PC-9 (cell line): ENCODE measurements at regions of chr9 and their contacts with region 1.

Region 1: DNA sequence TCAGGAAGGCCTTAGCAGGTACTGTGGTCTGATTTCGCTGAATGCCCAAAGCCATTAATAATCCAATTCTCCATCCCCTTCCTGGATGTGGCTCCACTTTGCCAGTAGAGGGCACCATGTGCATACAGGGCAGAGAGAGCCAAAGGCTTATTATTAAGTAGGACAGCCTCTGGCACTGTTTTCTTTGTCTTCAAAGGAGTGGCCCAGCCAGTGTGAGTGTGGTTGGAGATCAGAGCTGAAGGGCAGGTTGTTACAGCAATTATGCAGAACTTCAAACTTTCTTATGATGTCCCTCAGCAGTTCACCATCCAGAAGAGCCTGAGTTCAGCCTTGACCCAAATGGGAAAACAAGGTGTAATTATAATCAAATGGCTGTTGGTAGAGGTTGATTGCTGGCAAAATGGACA is 38.6 kb upstream of the CEMIP2 start:
- DNase-seq: peak; percentile 66 to 79
- H3K4me3 ChIP-seq: no peak overlapping the region
- H3K27ac ChIP-seq: no peak overlapping the region
- H3K4me1 ChIP-seq: no peaks in the 10 kb centered on the region
- H3K27me3 ChIP-seq: no peaks in the 10 kb centered on the region
- CTCF ChIP-seq: peak; percentile 89

Region 2: DNA sequence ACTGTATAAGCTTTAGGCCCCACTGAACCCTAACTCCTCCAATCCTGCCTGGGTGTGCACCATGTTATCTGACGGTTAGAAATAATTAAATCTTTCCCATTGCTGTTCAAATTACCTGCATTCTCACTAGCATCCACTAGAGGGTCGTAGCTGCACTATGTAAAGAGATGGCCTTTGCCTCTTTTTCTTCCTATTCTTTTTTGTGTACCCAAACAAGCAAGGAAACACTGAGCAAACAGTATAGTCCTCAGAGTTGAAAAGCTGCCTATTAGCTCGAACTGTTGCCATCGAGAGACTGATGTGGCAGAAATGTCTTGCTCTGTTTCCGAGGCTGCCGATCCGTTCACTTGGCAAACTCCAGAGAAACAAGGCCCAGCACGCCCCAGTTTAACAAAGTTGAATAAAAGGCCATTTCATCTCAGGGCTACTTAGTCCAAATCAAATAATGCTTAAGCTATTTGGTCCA is 521.7 kb before region 1 on chr9:
- CTCF ChIA-PET with region 1: no interaction called
- POLR2A ChIA-PET with region 1: no interaction called
- intact Hi-C with region 1: loop called (anchors 2 kb)
- DNase-seq: peak; percentile 49 to 55
- H3K4me3 ChIP-seq: no peak overlapping the region
- H3K27ac ChIP-seq: no peak overlapping the region
- H3K4me1 ChIP-seq: no peaks in the 10 kb centered on the region
- H3K27me3 ChIP-seq: no peaks in the 10 kb centered on the region
- CTCF ChIP-seq: peak; percentile 92

Region 3: DNA sequence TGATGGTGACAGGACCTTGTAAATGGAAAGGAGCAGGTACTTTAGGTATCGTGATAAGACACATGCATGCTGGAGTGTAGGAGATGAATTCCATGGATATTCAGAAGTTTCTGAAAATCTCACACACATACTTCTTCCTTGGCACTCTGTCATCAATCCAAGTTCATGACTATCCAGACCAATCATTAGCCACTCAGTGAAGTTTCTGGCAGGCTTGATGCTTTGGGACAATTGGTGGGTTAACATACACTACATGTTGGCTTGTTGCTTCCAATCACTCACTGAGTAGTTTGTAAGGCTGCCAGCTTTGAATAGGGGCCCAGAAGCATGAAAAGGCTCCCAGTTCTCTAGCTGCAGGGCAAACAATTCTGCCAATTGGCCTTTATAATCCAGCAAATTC is 186.2 kb before region 1 on chr9:
- CTCF ChIA-PET with region 1: no interaction called
- POLR2A ChIA-PET with region 1: no interaction called
- intact Hi-C with region 1: no loop called
- DNase-seq: no peak
- H3K4me3 ChIP-seq: no peak overlapping the region
- H3K27ac ChIP-seq: no peak overlapping the region
- H3K4me1 ChIP-seq: 0 out of 2 replicates have a peak, but pooled peaks cover under 1% of the 10 kb centered on the region
- H3K27me3 ChIP-seq: no peaks in the 10 kb centered on the region
- CTCF ChIP-seq: no peak

Region 4: DNA sequence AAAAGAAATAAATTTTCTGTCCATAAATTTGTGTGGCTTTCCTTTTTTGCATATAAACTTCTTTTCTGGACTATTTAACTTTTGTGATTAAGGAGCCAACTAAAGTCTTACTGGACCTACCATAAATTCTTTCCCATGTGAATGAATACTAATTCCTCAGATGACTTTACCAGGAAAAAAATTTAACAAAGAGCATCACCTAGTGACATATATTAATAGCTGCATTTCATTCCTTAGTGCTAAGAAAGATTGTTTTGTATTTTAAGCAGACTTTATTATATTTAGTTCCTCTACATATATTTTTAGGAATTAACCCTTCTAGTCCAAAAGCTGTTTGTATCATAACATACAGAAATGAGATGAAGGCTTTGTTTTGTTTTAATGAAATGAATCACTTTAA is 168.9 kb after region 1 on chr9:
- CTCF ChIA-PET with region 1: interaction called, 3 read pairs
- POLR2A ChIA-PET with region 1: no interaction called
- intact Hi-C with region 1: loop called (anchors 2 kb)
- DNase-seq: no peak
- H3K4me3 ChIP-seq: no peak overlapping the region
- H3K27ac ChIP-seq: no peak overlapping the region
- H3K4me1 ChIP-seq: no peaks in the 10 kb centered on the region
- H3K27me3 ChIP-seq: no peaks in the 10 kb centered on the region
- CTCF ChIP-seq: peak; percentile 47; the same call in 1 of the 2 replicates

Region 5: GRCh38 chr9:72193478-72193881 is 386.6 kb after region 1 on chr9:
- CTCF ChIA-PET with region 1: no interaction called
- POLR2A ChIA-PET with region 1: no interaction called
- intact Hi-C with region 1: no loop called
- DNase-seq: peak in 1 of 2 experiments; percentile 10
- H3K4me3 ChIP-seq: no peak overlapping the region
- H3K27ac ChIP-seq: no peak overlapping the region
- H3K4me1 ChIP-seq: no peaks in the 10 kb centered on the region
- H3K27me3 ChIP-seq: no peaks in the 10 kb centered on the region
- CTCF ChIP-seq: no peak

Region 6: GRCh38 chr9:72271613-72272478 is 464.9 kb after region 1 on chr9:
- CTCF ChIA-PET with region 1: no interaction called
- POLR2A ChIA-PET with region 1: no interaction called
- intact Hi-C with region 1: loop called (anchors 5 kb)
- DNase-seq: peak in 1 of 2 experiments; percentile 49
- H3K4me3 ChIP-seq: no peak overlapping the region
- H3K27ac ChIP-seq: no peak overlapping the region
- H3K4me1 ChIP-seq: no peaks in the 10 kb centered on the region
- H3K27me3 ChIP-seq: no peaks in the 10 kb centered on the region
- CTCF ChIP-seq: peak; percentile 92